Activated naive CD4-positive, alpha-beta T cell treated with anti-CD3 and anti-CD28 coated beads for 36 hours (primary cell): ENCODE measurements at regions of chr9 and their contacts with region 1.

Region 1: GRCh38 chr9:35790385-35791296 is 750 bp upstream of the NPR2 start:
- DNase-seq: peak; percentile 69
- H3K4me3 Mint-ChIP-seq: no peak overlapping the region
- H3K27ac Mint-ChIP-seq: no peak overlapping the region
- H3K4me1 Mint-ChIP-seq: no peaks in the 10 kb centered on the region
- H3K27me3 Mint-ChIP-seq: no peaks in the 10 kb centered on the region

Region 2: DNA sequence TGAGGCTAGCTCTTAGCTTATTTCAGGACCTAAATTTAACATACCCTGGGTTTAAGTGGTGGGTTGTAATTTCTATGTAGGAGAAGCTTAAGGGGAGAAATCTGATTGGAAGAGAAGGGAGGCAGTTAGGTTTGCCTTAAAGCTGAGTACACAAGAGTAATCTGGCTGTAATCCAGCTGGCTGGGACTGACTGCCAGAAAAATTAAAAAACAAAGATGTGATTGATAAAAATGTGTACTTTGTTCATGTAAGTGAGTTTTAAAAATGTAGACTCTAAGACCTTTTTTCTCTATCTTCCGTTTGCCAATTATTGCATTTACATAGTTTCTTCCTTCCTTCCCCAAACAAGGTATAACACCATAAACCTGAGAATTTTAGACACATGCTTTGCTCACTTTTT is 19.1 kb before region 1 on chr9:
- CTCF ChIA-PET with region 1: interaction called, 11 read pairs
- intact Hi-C with region 1: no loop called
- DNase-seq: no peak
- H3K4me3 Mint-ChIP-seq: no peak overlapping the region
- H3K27ac Mint-ChIP-seq: no peak overlapping the region
- H3K4me1 Mint-ChIP-seq: peaks cover 6% of the 10 kb centered on the region
- H3K27me3 Mint-ChIP-seq: no peaks in the 10 kb centered on the region

Region 3: GRCh38 chr9:35778496-35778895 is 12.1 kb before region 1 on chr9:
- CTCF ChIA-PET with region 1: interaction called, 11 read pairs
- intact Hi-C with region 1: no loop called
- DNase-seq: no peak
- H3K4me3 Mint-ChIP-seq: no peak overlapping the region
- H3K27ac Mint-ChIP-seq: no peak overlapping the region
- H3K4me1 Mint-ChIP-seq: no peaks in the 10 kb centered on the region
- H3K27me3 Mint-ChIP-seq: no peaks in the 10 kb centered on the region

Region 4: DNA sequence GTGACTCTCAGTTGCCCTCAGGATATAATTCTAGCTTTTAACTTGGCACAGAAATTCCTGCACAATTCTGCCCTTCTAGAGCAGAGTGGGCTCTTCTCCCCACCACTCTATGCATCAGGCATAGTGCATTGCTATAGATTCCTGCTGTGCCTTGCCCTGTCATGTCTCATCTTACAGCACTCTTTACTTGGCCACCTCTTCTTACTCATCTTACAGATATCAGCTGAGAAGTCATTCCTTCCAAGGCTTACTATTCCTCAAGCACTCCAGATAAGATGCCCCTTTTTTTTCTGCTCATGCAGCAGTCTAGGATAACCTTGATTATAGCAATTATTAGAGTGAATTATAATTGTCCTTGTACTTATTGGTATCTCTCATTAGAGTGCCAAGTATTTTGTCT is 32.3 kb after region 1 on chr9:
- CTCF ChIA-PET with region 1: interaction called, 33 read pairs
- intact Hi-C with region 1: loop called (anchors 1 kb)
- DNase-seq: no peak
- H3K4me3 Mint-ChIP-seq: no peak overlapping the region
- H3K27ac Mint-ChIP-seq: no peak overlapping the region
- H3K4me1 Mint-ChIP-seq: peaks cover 3% of the 10 kb centered on the region
- H3K27me3 Mint-ChIP-seq: no peaks in the 10 kb centered on the region

Region 5: DNA sequence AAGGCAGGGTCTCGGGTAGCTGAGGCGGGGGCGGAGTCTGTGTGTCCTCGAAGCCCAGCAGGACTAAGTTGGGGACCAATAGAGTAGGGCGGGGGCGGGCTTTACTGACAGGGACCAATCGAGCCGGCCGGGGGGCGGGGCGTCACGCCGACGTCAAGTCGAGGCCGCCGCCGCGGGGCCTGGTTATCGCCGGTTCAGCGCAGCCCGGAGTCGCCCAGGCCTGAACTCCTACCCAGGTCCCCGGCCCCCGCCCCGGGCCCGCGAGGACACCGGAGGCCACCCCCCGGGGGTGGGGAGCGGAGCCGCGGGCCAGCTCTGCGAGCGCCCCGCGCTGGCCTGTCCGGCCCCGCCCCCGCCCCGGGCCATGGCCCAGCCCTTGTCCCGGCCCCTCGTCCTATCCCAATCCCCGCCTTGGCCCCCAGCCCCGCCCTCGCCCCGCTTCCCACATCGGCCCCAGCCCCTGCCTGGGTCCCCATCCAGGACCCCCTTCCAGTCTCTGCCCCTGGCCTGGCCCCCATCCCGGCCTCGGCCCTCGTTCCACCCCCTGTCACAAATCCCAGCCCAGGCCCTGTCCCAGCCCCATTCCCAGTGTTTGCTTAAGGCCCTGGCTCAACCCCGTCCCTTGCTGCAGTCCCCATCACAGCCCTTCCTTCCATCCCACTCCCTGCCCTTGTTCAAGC is 38.6 kb after region 1 on chr9 and contains the start of gene TMEM8B:
- CTCF ChIA-PET with region 1: interaction called, 33 read pairs
- intact Hi-C with region 1: loop called (anchors 1 kb)
- DNase-seq: peak; percentile 96
- H3K4me3 Mint-ChIP-seq: peak within 1 kb of the TSS; percentile 89
- H3K27ac Mint-ChIP-seq: peak within 1 kb of the TSS; percentile 59
- H3K4me1 Mint-ChIP-seq: peaks cover 24% of the 10 kb centered on the region
- H3K27me3 Mint-ChIP-seq: peaks cover 2% of the 10 kb centered on the region
- total RNA-seq, gene TMEM8B: 6.2 to 6.6 TPM

Region 6: DNA sequence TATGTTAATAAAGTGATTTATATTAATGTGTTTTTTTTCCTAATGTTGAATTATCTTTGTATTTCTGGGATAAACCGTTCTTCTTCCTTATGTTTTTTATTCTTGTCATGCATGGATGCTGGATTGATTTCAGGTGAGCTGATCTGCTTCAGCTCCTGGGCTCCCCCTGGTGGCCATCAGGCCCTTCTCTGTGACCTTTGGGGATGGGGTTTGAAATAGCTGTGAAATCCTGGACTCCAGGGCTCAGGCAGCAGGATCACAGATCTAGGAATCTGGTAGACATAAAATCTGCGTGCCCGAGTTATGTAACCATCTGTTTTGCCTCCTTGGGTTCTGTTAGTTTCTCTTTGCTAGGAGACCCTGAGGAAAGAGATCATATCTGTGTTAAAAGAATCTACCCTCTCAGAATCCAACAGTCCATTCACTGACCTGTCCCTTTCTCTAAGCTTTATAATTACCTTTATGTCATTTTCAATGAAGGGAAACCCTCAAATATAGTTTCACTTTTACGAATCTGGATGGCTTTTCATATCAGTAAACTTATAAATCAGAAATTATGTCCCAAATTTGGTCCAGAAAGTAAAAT is 91.7 kb after region 1 on chr9:
- CTCF ChIA-PET with region 1: interaction called, 17 read pairs
- intact Hi-C with region 1: loop called (anchors 1 kb)
- DNase-seq: peak; percentile 89
- H3K4me3 Mint-ChIP-seq: no peak overlapping the region
- H3K27ac Mint-ChIP-seq: no peak overlapping the region
- H3K4me1 Mint-ChIP-seq: no peaks in the 10 kb centered on the region
- H3K27me3 Mint-ChIP-seq: no peaks in the 10 kb centered on the region

Region 7: DNA sequence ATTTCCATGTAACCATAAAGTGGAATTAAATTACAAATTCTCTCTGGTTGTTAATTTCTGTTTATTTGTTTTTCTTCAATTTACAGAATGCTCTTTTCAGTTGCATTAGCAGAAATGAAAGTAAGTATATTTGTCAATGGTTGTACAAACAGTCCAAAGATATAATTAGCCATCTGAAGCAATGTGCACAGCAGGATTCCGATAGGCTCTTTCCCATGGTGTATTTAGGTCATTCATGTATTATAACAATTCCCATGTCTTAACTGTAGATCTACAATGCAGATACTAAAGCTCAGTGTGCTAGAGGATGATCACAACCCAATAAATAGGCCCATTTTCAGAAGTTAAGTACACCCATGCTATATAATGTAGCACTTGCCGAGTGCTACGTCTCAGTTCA is 289.9 kb after region 1 on chr9:
- CTCF ChIA-PET with region 1: no interaction called
- intact Hi-C with region 1: no loop called
- DNase-seq: no peak
- H3K4me3 Mint-ChIP-seq: no peak overlapping the region
- H3K27ac Mint-ChIP-seq: no peak overlapping the region
- H3K4me1 Mint-ChIP-seq: no peaks in the 10 kb centered on the region
- H3K27me3 Mint-ChIP-seq: no peaks in the 10 kb centered on the region